ENCODE measurements at regions of chr4 and their contacts with region 1.

Region 1: DNA sequence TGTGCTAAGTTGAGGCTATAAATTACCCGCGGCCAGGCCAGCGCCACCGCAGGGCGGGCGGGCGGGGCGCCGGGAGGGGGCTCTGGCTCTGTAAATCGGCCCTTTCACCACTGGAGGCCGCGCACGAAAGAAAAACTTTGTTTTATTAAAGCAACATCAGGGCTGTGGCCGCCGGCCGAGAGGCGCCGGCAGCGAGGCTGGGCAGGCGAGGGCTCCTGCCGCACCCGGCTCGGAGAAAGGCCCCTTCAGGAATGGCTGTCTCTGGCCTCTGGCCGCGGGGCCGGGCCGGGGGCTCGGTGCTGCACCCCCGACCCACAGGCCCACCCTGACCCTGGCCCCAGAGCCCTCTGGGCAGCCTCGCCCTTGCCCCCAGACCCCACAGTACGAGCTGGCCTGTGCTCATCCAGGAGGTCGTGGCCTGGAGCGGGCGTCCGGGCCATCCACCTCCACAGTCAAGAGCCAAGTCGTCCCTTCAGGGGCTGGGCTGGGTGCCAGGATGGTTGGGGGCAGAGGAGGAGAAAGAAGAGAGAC is 29.5 kb upstream of the FGFR3 start:
- DNase-seq: peak; percentile 36
- H3K4me3 ChIP-seq: no peak overlapping the region
- H3K27ac ChIP-seq: no peak overlapping the region
- H3K4me1 ChIP-seq: peaks cover 5% of the 10 kb centered on the region
- CTCF ChIP-seq: no peak

Region 2: DNA sequence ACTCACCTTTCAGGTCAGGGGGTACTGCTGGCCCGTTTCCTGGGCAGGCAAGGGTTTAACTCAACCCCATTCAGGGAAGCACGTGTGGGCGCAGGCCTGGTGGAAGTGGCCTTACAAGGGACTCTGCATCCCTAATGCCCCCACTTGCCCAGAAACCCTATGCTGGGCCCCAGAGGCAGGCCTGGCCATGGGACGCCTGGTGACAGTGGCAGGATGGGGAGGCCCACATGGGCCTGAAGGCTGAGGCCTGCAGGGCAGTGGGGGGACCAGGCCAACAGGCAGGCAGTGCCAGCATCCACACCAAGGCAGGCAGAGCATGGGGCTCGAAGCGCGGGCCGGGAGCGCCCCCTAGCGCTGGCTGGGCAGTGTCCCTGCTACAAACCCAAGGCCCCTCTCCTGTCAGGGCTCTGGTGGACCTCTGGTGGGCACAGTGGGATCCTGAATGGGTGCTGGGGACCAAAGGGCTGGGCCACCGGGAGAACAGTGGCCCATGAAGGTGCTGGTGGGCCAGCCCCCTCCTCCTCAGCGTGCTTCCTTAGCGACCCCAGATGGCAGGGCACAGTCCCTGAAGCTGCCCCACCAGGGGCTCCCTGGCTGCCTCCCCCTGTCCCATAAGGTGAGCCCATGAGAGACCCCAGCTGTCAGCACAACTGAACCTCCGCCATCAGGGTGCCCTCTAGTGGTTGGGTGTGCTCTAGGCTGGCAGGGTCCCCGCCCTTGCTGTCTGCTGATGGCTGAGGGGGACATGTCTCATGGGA is 46.3 kb after region 1 on chr4:
- CTCF ChIA-PET with region 1: interaction called, 4 read pairs
- POLR2A ChIA-PET with region 1: no interaction called
- intact Hi-C with region 1: loop called (anchors 5 kb)
- DNase-seq: peak; percentile 72
- H3K4me3 ChIP-seq: no peak overlapping the region
- H3K27ac ChIP-seq: no peak overlapping the region
- H3K4me1 ChIP-seq: peaks cover 5% of the 10 kb centered on the region
- CTCF ChIP-seq: peak; percentile 89

Measured in OCI-LY7 (cell line).